ENCODE measurements at regions of chr14 and their contacts with region 1.

Region 1: GRCh38 chr14:58191763-58192601 is 8.0 kb upstream of the ACTR10 start:
- DNase-seq: no peak
- ATAC-seq: no peak
- H3K4me3 ChIP-seq: no peak overlapping the region
- H3K27ac ChIP-seq: no peak overlapping the region
- H3K4me1 ChIP-seq: no peaks in the 10 kb centered on the region
- H3K27me3 ChIP-seq: no peaks in the 10 kb centered on the region
- CTCF ChIP-seq: no peak

Region 2: DNA sequence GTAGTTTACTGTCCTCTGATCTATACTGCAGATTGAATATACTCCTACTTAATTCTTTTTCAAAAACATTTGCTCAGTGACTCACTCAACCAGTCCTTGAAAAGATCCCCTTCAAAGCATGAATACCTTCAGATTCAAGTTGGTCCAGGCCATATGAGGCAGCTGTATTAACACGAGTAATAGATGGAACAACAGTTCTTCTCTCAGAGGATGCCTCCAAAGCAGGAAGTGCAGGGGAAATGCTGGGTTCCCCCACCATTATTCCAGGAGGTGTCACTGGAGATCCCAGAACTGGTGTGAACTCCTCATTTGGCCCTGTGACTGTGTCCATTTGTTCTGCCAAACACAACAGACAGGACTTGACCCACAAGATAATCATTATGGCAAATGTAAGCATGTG is 60.6 kb before region 1 on chr14:
- intact Hi-C with region 1: no loop called
- DNase-seq: no peak
- ATAC-seq: no peak
- H3K4me3 ChIP-seq: no peak overlapping the region
- H3K27ac ChIP-seq: no peak overlapping the region
- H3K4me1 ChIP-seq: no peaks in the 10 kb centered on the region
- H3K27me3 ChIP-seq: no peaks in the 10 kb centered on the region
- CTCF ChIP-seq: no peak

Region 3: GRCh38 chr14:58171090-58171489 is 20.9 kb before region 1 on chr14:
- intact Hi-C with region 1: loop called in 1 of 2 experiments (anchors 1 kb)
- DNase-seq: peak; percentile 71 to 74
- ATAC-seq: peak; percentile 88 to 99 (median 96)
- H3K4me3 ChIP-seq: peak overlapping the region; percentile 28
- H3K27ac ChIP-seq: no peak overlapping the region
- H3K4me1 ChIP-seq: no peaks in the 10 kb centered on the region
- H3K27me3 ChIP-seq: no peaks in the 10 kb centered on the region
- CTCF ChIP-seq: no peak

Region 4: GRCh38 chr14:58297762-58298476 is 105.9 kb after region 1 on chr14:
- intact Hi-C with region 1: no loop called
- DNase-seq: peak; percentile 99
- ATAC-seq: peak; percentile 95 to 97 (median 96)
- H3K4me3 ChIP-seq: peak overlapping the region; percentile 95
- H3K27ac ChIP-seq: peak overlapping the region; percentile 95
- H3K4me1 ChIP-seq: peaks cover 34% of the 10 kb centered on the region
- H3K27me3 ChIP-seq: no peaks in the 10 kb centered on the region
- CTCF ChIP-seq: peak; percentile 4